ENCODE measurements at regions of chr1 and their contacts with region 1.

Region 1: DNA sequence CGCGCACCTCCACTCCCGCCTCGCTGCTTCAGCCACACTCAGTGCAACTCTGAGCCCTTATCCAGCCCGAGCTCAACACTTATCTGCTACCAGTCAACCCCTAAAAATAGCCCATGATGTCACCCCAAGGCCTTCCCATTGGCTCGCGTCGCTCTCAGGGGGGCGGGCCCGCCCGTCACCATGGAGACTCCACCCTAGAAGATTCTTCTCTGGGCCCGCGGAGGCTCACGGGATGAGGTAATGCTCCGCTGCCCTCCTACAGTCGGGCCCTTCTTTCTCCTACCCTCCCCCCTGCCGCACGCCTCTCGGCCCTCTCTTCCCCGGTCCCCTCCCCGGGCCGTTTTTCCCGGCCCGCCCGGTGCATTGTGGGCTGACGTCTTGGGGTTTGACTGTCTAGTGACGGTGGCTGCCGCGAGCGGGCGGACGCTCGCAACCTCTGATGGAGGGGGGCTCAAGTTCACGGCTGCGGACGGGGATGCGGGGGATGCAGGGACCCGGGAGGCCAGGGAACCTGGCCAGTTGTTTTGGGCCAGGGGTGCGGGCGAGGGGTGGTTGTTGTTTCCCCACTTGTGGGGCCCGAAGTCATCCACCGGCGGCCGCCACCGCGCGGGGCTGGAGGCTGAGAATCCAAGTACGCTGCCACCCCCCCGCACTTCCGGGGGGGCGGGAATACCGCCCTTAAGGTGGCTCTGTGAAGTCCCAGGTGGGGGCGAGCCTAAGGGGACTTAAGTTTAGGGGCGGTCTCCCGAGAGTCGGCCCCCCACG is at the start of gene JUN:
- DNase-seq: peak; percentile 97 to 100 (median 98)
- H3K4me3 ChIP-seq: peak within 1 kb of the TSS; percentile 92
- H3K4me3 Mint-ChIP-seq: peak within 1 kb of the TSS; percentile 86 to 97 (median 92)
- H3K27ac ChIP-seq: peak within 1 kb of the TSS; percentile 99
- H3K27ac Mint-ChIP-seq: peak within 1 kb of the TSS; percentile 95 to 100 (median 100)
- H3K4me1 ChIP-seq: peaks cover 19% of the 10 kb centered on the region
- H3K4me1 Mint-ChIP-seq: peaks cover 25 to 60% (median 43%) of the 10 kb centered on the region in 3 donors
- H3K27me3 ChIP-seq: no peaks in the 10 kb centered on the region
- H3K27me3 Mint-ChIP-seq: peaks cover 0 to 19% of the 10 kb centered on the region in 2 donors
- total RNA-seq, gene JUN: 25.5 to 27.7 TPM

Region 2: DNA sequence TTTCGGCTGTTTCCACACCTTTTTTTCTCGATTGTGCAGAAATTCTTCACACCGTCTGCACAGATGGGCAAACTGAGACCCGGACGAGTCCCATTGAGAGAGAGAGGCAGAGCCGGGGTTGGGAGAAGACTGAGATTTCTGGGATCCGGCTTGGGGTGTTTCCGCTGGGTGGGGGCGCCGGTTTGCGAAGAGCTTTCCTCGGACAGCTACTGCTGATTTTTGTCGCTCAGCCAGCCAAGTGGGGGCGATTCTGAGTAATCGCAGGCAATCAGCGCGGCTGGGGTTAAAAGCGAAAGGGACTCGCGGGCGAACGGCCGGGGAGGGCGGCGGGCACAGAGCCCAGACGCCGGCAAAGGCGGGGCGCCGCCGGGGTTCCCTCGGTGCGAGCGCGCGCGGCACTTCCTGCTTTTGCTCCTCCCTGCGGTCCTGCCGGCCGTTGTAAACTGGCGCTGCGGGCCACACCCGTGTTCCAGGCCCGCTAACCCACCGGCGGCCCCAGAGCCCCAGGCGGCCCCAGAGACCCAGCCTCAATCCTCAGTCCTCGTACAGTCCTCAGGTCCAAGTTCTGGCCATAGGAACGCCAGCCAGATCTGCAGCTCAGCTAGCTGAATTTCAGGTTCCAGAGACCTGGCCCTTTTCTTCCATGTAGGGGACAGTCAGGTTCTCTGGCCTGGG is 32.0 kb after region 1 on chr1:
- CTCF ChIA-PET with region 1: interaction called, 6 read pairs
- POLR2A ChIA-PET with region 1: interaction called, 24 read pairs
- DNase-seq: peak; percentile 73 to 86 (median 79)
- H3K4me3 ChIP-seq: peak overlapping the region; percentile 83
- H3K4me3 Mint-ChIP-seq: peak overlapping the region; percentile 91 to 98 (median 91)
- H3K27ac ChIP-seq: peak overlapping the region; percentile 57
- H3K27ac Mint-ChIP-seq: peak overlapping the region; percentile 86 to 99 (median 96)
- H3K4me1 ChIP-seq: peaks cover 35% of the 10 kb centered on the region
- H3K4me1 Mint-ChIP-seq: peaks cover 39 to 56% (median 49%) of the 10 kb centered on the region in 3 donors
- H3K27me3 ChIP-seq: no peaks in the 10 kb centered on the region
- H3K27me3 Mint-ChIP-seq: no peaks in the 10 kb centered on the region

Region 3: DNA sequence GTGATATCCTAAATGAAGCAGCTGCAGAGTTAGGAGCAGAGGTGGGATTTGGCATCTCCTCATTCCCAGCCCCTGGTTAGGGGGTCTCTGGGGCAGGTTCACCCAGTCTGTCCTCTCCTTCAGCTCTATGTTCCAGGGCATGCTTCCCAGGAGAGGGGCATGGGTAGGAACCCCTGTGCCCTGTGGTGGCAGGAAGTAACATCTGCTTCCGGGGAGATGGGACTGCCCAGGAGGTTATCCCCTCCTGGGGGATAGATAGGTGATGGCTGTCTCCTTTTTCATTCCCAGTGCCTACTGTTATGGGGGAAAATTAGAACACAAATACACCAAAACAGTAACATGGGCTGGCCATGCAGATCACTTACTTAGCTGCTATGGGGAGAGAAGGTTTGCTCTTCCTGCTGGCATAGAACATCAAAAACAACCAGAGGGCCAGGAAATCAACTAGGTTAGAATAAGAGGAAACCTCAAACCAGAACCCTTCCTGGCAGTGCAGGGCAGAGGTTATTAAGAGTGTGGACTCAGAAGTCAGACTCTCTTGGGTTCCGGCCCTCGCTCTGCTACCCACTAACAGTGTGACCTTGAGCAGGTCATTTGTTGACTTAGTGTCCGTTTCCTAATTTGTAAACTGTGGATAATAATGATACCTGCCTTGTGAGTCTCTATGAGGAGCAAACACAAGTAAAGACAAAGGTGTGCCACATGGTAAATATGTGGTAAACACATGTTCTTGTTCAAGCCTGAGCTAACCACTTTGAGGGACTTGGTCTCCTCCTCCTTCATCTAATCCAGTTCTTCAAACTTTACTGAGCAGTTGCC is 157.5 kb after region 1 on chr1:
- CTCF ChIA-PET with region 1: interaction called, 10 read pairs
- POLR2A ChIA-PET with region 1: interaction called, 33 read pairs
- DNase-seq: peak in 4 of 5 donors; percentile 22 to 75 (median 60)
- H3K4me3 ChIP-seq: peak overlapping the region; percentile 43
- H3K4me3 Mint-ChIP-seq: peak overlapping the region; percentile 39 to 91 (median 76)
- H3K27ac ChIP-seq: no peak overlapping the region
- H3K27ac Mint-ChIP-seq: peak overlapping the region; percentile 66 to 92 (median 82)
- H3K4me1 ChIP-seq: peaks cover 61% of the 10 kb centered on the region
- H3K4me1 Mint-ChIP-seq: peaks cover 71 to 83% (median 79%) of the 10 kb centered on the region in 3 donors
- H3K27me3 ChIP-seq: no peaks in the 10 kb centered on the region
- H3K27me3 Mint-ChIP-seq: no peaks in the 10 kb centered on the region

Region 4: DNA sequence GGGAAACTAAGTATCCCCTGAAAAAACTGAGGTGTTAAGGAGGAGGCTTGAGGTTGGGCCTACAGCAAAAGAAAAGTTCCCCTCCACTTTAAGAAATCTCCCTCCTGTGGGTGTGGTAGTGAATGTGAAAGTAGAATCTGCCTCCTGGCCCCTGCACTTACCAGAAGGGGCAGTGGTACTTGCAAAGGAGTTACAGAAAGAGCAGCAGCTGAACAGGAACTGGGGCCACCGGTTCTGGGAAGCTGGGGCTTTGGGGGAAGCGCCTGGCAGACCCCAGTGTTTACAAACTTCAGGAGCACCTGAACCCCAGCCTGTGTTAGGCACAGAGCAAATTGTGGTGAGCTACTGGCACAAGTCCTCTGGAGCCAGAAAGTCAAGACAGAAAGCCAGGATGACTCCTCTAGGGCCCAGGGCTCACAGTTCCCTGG is 262.6 kb after region 1 on chr1:
- CTCF ChIA-PET with region 1: interaction called, 4 read pairs
- POLR2A ChIA-PET with region 1: interaction called, 15 read pairs
- DNase-seq: peak; percentile 10 to 68 (median 32)
- H3K4me3 ChIP-seq: no peak overlapping the region
- H3K4me3 Mint-ChIP-seq: peak overlapping the region in 6 of 7 donors; percentile 56 to 86 (median 69)
- H3K27ac ChIP-seq: no peak overlapping the region
- H3K27ac Mint-ChIP-seq: peak overlapping the region; percentile 72 to 99 (median 86)
- H3K4me1 ChIP-seq: peaks cover 38% of the 10 kb centered on the region
- H3K4me1 Mint-ChIP-seq: peaks cover 50 to 58% (median 53%) of the 10 kb centered on the region in 3 donors
- H3K27me3 ChIP-seq: no peaks in the 10 kb centered on the region
- H3K27me3 Mint-ChIP-seq: no peaks in the 10 kb centered on the region

Region 5: DNA sequence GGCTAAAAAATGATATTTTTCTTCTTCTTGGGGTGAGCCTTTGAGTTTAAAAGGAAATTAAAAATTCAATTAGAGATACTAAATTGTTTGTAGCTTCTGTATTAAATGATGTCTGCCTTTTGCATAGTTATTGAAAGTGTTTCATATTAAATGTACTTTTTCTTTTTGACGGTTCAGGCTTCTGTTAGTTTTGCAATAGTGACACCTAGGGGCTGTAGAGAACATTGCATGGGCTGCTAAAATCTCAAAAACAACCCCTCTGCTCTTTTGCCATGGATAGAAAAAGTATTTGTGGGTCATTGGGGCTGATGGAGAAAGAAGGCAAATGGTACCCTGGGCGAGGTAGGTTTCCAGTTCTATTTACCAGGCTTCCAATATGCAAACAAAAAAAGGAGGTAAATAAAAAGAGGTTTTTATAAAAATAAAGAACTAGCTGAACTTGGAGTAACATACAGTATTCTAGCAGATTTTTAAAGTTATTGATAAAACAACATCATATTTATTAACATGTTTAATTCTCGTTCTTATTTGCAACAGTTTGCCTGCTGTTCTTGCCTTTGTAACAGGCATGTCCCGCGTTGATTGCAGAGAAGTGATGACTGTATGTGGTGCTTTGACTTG is 915.2 kb after region 1 on chr1:
- CTCF ChIA-PET with region 1: interaction called, 11 read pairs
- POLR2A ChIA-PET with region 1: no interaction called
- DNase-seq: peak in 3 of 5 donors; percentile 36 to 51 (median 42)
- H3K4me3 ChIP-seq: no peak overlapping the region
- H3K4me3 Mint-ChIP-seq: no peak overlapping the region
- H3K27ac ChIP-seq: no peak overlapping the region
- H3K27ac Mint-ChIP-seq: no peak overlapping the region
- H3K4me1 ChIP-seq: peaks cover 6% of the 10 kb centered on the region
- H3K4me1 Mint-ChIP-seq: peaks cover 17 to 28% (median 22%) of the 10 kb centered on the region in 3 donors
- H3K27me3 ChIP-seq: no peaks in the 10 kb centered on the region
- H3K27me3 Mint-ChIP-seq: peaks cover 0 to 2% of the 10 kb centered on the region in 2 donors